Body of pancreas (tissue), 4 donors: ENCODE measurements at regions of chr20 and their contacts with region 1.

Region 1: DNA sequence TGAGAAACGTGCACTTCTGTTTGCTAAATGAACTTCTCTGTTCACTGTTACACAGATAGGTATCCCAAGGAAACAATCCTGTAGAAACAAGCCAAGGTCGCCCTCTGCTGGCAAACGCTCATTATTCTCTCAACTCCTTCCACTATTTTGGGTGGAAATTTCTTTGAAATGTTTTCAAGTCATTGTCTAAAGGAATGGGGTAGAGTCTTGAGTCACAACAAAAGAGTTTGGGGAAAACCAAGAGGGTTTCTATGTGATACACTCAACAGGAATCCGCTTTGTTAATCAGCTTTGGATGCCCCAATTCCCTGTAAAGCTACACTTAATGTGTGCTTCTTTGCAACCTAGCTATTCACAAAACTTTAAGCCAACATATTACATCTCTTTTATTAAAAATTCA is 4.6 kb upstream of the RAE1 start:
- DNase-seq: peak; percentile 75 to 87 (median 78)
- ATAC-seq: no peak
- H3K4me3 ChIP-seq: no peak overlapping the region
- H3K27ac ChIP-seq: no peak overlapping the region
- H3K4me1 ChIP-seq: no peaks in the 10 kb centered on the region
- H3K27me3 ChIP-seq: no peaks in the 10 kb centered on the region
- CTCF ChIP-seq: peak; percentile 46 to 83 (median 68)
- POLR2A ChIP-seq: no peak

Region 2: GRCh38 chr20:57089691-57090150 is 256.8 kb before region 1 on chr20:
- intact Hi-C with region 1: loop called (anchors 5 kb)
- DNase-seq: peak; percentile 65 to 80 (median 70)
- ATAC-seq: peak; percentile 74
- H3K4me3 ChIP-seq: no peak overlapping the region
- H3K27ac ChIP-seq: no peak overlapping the region
- H3K4me1 ChIP-seq: peaks cover 7% of the 10 kb centered on the region
- H3K27me3 ChIP-seq: peaks cover 0 to 11% of the 10 kb centered on the region in 2 donors
- CTCF ChIP-seq: peak; percentile 76 to 94 (median 82)
- POLR2A ChIP-seq: no peak